ENCODE measurements at regions of chr2 and their contacts with region 1.

Region 1: DNA sequence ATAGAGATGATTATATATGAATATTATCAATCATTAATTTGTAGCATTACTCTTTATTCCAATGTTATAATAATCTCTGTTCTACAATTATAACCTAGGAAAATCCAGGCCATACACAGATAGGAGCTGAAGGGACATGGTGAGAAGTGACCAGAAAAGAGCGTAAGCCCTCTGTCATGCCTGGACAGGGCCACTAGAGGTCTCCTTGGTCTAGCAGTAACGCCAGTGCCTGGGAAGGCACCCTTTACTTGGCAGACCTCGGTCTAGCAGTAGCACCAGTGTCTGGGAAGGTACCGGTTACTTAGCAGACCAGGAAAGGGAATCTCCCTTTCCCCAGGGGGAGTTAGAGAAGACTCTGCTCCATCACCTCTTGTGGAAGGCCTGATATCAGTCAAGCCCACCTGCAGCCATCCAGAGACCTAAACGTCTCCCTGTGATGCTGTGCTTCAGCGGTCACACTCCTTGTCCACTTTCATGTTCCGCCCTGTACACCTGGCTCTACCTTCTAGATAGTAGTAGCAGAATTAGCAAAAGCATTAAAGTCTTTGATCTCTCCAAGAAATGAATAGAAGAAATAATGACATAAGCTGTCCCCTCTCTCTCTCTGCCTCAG is 447.5 kb upstream of the FSIP2 start:
- DNase-seq: no peak
- H3K4me3 ChIP-seq: no peak overlapping the region
- H3K27ac ChIP-seq: no peak overlapping the region
- H3K4me1 ChIP-seq: no peaks in the 10 kb centered on the region
- H3K27me3 ChIP-seq: no peaks in the 10 kb centered on the region
- CTCF ChIP-seq: peak; percentile 58

Region 2: GRCh38 chr2:185578322-185578721 is 287.2 kb after region 1 on chr2:
- CTCF ChIA-PET with region 1: no interaction called
- POLR2A ChIA-PET with region 1: interaction called, 17 read pairs
- intact Hi-C with region 1: no loop called
- DNase-seq: no peak
- H3K4me3 ChIP-seq: no peak overlapping the region
- H3K27ac ChIP-seq: no peak overlapping the region
- H3K4me1 ChIP-seq: peaks cover 9% of the 10 kb centered on the region; the same call in 1 of the 2 replicates
- H3K27me3 ChIP-seq: no peaks in the 10 kb centered on the region
- CTCF ChIP-seq: no peak